GM10248 (cell line): ENCODE measurements at regions of chr2 and their contacts with region 1.

Region 1: DNA sequence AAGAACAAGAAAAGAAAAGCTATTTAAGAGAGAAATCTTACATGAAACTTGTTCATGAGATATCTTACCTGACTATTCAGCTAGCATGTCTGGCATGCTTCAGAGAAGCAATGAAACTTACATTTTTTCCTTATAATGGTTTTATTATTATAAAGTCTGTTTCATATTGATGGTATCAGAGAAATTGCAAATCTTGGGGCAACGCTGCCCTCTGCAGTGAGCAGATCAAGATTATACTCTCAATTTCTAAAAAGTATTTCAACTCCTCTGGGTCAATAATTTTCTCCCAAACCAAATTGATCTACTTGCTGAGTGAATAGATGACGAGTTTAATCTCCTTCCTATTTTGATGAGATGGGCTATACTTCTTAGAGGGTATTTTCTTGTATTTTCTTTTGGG is 235.6 kb downstream of the NUP35 start:
- DNase-seq: no peak
- CTCF ChIP-seq: no peak

Region 2: GRCh38 chr2:183348492-183348891 is 11.4 kb before region 1 on chr2:
- CTCF ChIA-PET with region 1: interaction called, 11 read pairs
- POLR2A ChIA-PET with region 1: no interaction called
- DNase-seq: no peak
- CTCF ChIP-seq: no peak

Region 3: GRCh38 chr2:183383854-183384253 is 24.0 kb after region 1 on chr2:
- CTCF ChIA-PET with region 1: no interaction called
- POLR2A ChIA-PET with region 1: no interaction called
- DNase-seq: no peak
- CTCF ChIP-seq: no peak